ENCODE measurements at regions of chr6 and their contacts with region 1.

Region 1: DNA sequence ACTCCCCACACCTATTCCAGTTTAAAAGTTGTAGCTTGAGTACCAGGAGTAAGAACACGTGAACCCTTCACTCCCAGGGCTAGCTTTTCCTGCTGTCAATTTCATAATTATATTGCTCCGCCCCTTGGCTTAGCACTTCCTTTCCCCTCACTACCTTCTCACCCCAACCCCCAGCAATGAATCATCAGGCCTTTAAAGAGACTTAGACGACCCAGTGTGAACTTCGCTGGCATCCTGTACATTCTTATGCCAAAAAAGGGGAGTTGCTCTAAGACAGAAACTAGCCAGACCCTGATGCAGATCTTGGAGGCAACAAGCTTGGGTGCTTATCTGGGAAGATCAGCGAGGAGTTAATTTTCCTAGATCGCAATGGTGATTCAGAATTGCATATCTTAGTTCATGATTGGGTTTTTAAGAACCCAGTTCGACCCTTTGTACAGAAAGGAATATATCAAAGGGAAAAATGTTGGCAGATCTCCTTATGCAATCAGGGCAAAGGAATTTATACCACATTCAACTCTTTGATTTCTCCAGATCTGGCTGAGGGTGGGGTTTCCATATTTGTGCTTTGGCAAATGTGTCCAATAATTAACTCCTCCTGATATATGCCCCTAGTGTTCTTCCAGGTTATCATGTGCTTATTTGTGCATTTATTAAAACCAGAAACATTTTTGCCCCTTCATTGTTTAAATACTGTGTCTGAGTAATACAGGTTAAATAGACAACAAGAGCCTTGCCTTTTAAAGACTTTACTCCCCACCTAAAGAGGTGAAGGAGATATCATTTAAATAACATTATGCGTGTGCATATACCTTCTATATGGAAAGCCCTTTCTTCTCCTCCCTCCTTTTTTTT is 8.1 kb upstream of the ATXN1 start:
- DNase-seq: peak in 2 of 6 donors; percentile 43 to 47
- ATAC-seq: peak; percentile 51 to 74 (median 62)
- H3K4me3 ChIP-seq: no peak overlapping the region
- H3K27ac ChIP-seq: peak overlapping the region in 2 of 4 donors; percentile 6 to 54
- H3K4me1 ChIP-seq: peaks cover 3 to 14% (median 3%) of the 10 kb centered on the region in 3 donors
- H3K27me3 ChIP-seq: no peaks in the 10 kb centered on the region
- CTCF ChIP-seq: no peak

Region 2: DNA sequence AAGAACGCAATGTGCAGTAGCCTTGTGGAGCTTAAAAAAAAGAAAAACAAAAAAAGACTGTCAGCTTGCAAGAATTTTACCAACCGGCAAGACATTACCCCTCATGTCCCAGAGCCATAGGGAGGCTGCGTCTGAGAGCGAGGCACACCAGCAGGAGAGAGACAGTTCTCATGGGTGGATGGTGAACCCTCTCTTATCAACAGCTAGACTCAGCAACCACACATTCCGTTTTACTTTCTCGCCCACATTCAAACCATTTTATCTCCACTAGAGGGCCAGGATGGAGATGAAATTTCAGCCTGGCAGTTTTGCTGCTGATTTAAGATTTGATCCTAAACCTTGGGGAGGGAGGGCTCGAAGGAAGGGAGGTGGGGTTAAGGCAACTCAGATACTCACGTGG is 255.1 kb before region 1 on chr6:
- intact Hi-C with region 1: loop called in 1 of 3 experiments (anchors 5 kb)
- DNase-seq: no peak
- ATAC-seq: peak in 1 of 4 donors; percentile 35
- H3K4me3 ChIP-seq: no peak overlapping the region
- H3K27ac ChIP-seq: no peak overlapping the region
- H3K4me1 ChIP-seq: peaks cover 0 to 10% (median 8%) of the 10 kb centered on the region in 3 donors
- H3K27me3 ChIP-seq: no peaks in the 10 kb centered on the region
- CTCF ChIP-seq: peak in 2 of 4 donors; percentile 23 to 24